IMR-90 (cell line): ENCODE measurements at regions of chr11 and their contacts with region 1.

Region 1: GRCh38 chr11:62542750-62543567 is 3.6 kb downstream of the AHNAK start:
- DNase-seq: peak; percentile 70
- ATAC-seq: peak; percentile 44
- H3K4me3 ChIP-seq: peak overlapping the region; percentile 85
- H3K27ac ChIP-seq: peak overlapping the region; percentile 94
- H3K4me1 ChIP-seq: peaks cover 50% of the 10 kb centered on the region
- H3K27me3 ChIP-seq: no peaks in the 10 kb centered on the region
- CTCF ChIP-seq: peak; percentile 92
- POLR2A ChIP-seq: no peak
- RAD21 ChIP-seq: peak; percentile 92

Region 2: GRCh38 chr11:61928606-61929005 is 614.4 kb before region 1 on chr11:
- CTCF ChIA-PET with region 1: no interaction called
- POLR2A ChIA-PET with region 1: interaction called, 15 read pairs
- dilution Hi-C with region 1: no loop called
- in situ Hi-C with region 1: no loop called
- intact Hi-C with region 1: no loop called
- DNase-seq: peak; percentile 13
- ATAC-seq: no peak; the same call in 1 of the 2 replicates
- H3K4me3 ChIP-seq: no peak overlapping the region
- H3K27ac ChIP-seq: no peak overlapping the region
- H3K4me1 ChIP-seq: peaks cover 7% of the 10 kb centered on the region; the same call in 1 of the 2 replicates
- H3K27me3 ChIP-seq: peaks cover 11% of the 10 kb centered on the region
- CTCF ChIP-seq: no peak
- POLR2A ChIP-seq: no peak
- RAD21 ChIP-seq: no peak

Region 3: GRCh38 chr11:62193952-62194351 is 349.0 kb before region 1 on chr11:
- CTCF ChIA-PET with region 1: no interaction called
- POLR2A ChIA-PET with region 1: no interaction called
- dilution Hi-C with region 1: no loop called
- in situ Hi-C with region 1: no loop called
- intact Hi-C with region 1: no loop called
- DNase-seq: no peak
- ATAC-seq: no peak
- H3K4me3 ChIP-seq: no peak overlapping the region
- H3K27ac ChIP-seq: no peak overlapping the region
- H3K4me1 ChIP-seq: no peaks in the 10 kb centered on the region
- H3K27me3 ChIP-seq: peaks cover 20% of the 10 kb centered on the region
- CTCF ChIP-seq: no peak
- POLR2A ChIP-seq: no peak
- RAD21 ChIP-seq: no peak

Region 4: GRCh38 chr11:62394825-62395538 is 148.0 kb before region 1 on chr11:
- CTCF ChIA-PET with region 1: interaction called, 15 read pairs
- POLR2A ChIA-PET with region 1: no interaction called
- dilution Hi-C with region 1: no loop called
- in situ Hi-C with region 1: no loop called
- intact Hi-C with region 1: loop called (anchors 1 kb)
- DNase-seq: peak; percentile 80
- ATAC-seq: peak; percentile 86
- H3K4me3 ChIP-seq: peak overlapping the region; percentile 36
- H3K27ac ChIP-seq: peak overlapping the region; percentile 54
- H3K4me1 ChIP-seq: peaks cover 15% of the 10 kb centered on the region; the same call in 1 of the 2 replicates
- H3K27me3 ChIP-seq: peaks cover 2% of the 10 kb centered on the region; the same call in 1 of the 2 replicates
- CTCF ChIP-seq: peak; percentile 80
- POLR2A ChIP-seq: no peak
- RAD21 ChIP-seq: peak; percentile 88

Region 5: GRCh38 chr11:62508268-62509058 is 34.5 kb before region 1 on chr11:
- CTCF ChIA-PET with region 1: interaction called, 5 read pairs
- POLR2A ChIA-PET with region 1: no interaction called
- dilution Hi-C with region 1: no loop called
- in situ Hi-C with region 1: no loop called
- intact Hi-C with region 1: loop called (anchors 5 kb)
- DNase-seq: peak; percentile 36
- ATAC-seq: peak; percentile 80
- H3K4me3 ChIP-seq: no peak overlapping the region
- H3K27ac ChIP-seq: peak overlapping the region; percentile 15; the same call in 1 of the 2 replicates
- H3K4me1 ChIP-seq: peaks cover 4% of the 10 kb centered on the region
- H3K27me3 ChIP-seq: no peaks in the 10 kb centered on the region
- CTCF ChIP-seq: peak; percentile 44
- POLR2A ChIP-seq: no peak
- RAD21 ChIP-seq: peak; percentile 43

Region 6: GRCh38 chr11:62556108-62556871 is 13.3 kb after region 1 on chr11:
- CTCF ChIA-PET with region 1: interaction called, 24 read pairs
- POLR2A ChIA-PET with region 1: interaction called, 16 read pairs
- dilution Hi-C with region 1: no loop called
- in situ Hi-C with region 1: no loop called
- intact Hi-C with region 1: loop called (anchors 1 kb)
- DNase-seq: peak; percentile 95
- ATAC-seq: peak; percentile 57
- H3K4me3 ChIP-seq: peak overlapping the region; percentile 3; the same call in 1 of the 2 replicates
- H3K27ac ChIP-seq: peak overlapping the region; percentile 78
- H3K4me1 ChIP-seq: peaks cover 40% of the 10 kb centered on the region
- H3K27me3 ChIP-seq: no peaks in the 10 kb centered on the region
- CTCF ChIP-seq: no peak
- POLR2A ChIP-seq: no peak
- RAD21 ChIP-seq: no peak; the same call in 1 of the 2 replicates

Region 7: GRCh38 chr11:62601394-62602140 is 58.6 kb after region 1 on chr11 and contains the start of gene MTA2:
- CTCF ChIA-PET with region 1: no interaction called
- POLR2A ChIA-PET with region 1: no interaction called
- dilution Hi-C with region 1: no loop called
- in situ Hi-C with region 1: no loop called
- intact Hi-C with region 1: no loop called
- DNase-seq: peak; percentile 97
- ATAC-seq: peak; percentile 81
- H3K4me3 ChIP-seq: peak within 1 kb of the TSS; percentile 87
- H3K27ac ChIP-seq: peak within 1 kb of the TSS; percentile 97
- H3K4me1 ChIP-seq: peaks cover 7% of the 10 kb centered on the region
- H3K27me3 ChIP-seq: no peaks in the 10 kb centered on the region
- CTCF ChIP-seq: no peak
- POLR2A ChIP-seq: no peak; the same call in none of the 2 replicates
- RAD21 ChIP-seq: no peak
- total RNA-seq, gene MTA2: 126 and 136 TPM in 2 replicates